Ovary (tissue), 10 donors: ENCODE measurements at regions of chr5 and their contacts with region 1.

Region 1: GRCh38 chr5:89384391-89384790 is 501.4 kb upstream of the MEF2C start:
- DNase-seq: no peak
- H3K4me3 ChIP-seq: no peak overlapping the region
- H3K27ac ChIP-seq: no peak overlapping the region
- H3K4me1 ChIP-seq: no peaks in the 10 kb centered on the region
- H3K27me3 ChIP-seq: no peaks in the 10 kb centered on the region
- CTCF ChIP-seq: no peak
- EP300 ChIP-seq: no peak
- POLR2A ChIP-seq: no peak

Region 2: GRCh38 chr5:89327608-89328007 is 56.8 kb before region 1 on chr5:
- intact Hi-C with region 1: loop called in 1 of 4 experiments (anchors 2 kb)
- DNase-seq: no peak
- H3K4me3 ChIP-seq: no peak overlapping the region
- H3K27ac ChIP-seq: no peak overlapping the region
- H3K4me1 ChIP-seq: no peaks in the 10 kb centered on the region
- H3K27me3 ChIP-seq: no peaks in the 10 kb centered on the region
- CTCF ChIP-seq: no peak
- EP300 ChIP-seq: no peak
- POLR2A ChIP-seq: no peak

Region 3: GRCh38 chr5:89338935-89339334 is 45.5 kb before region 1 on chr5:
- intact Hi-C with region 1: no loop called
- DNase-seq: no peak
- H3K4me3 ChIP-seq: no peak overlapping the region
- H3K27ac ChIP-seq: no peak overlapping the region
- H3K4me1 ChIP-seq: peaks cover 3% of the 10 kb centered on the region
- H3K27me3 ChIP-seq: peaks cover 2% of the 10 kb centered on the region
- CTCF ChIP-seq: no peak
- EP300 ChIP-seq: no peak
- POLR2A ChIP-seq: no peak

Region 4: GRCh38 chr5:89421035-89421434 is 36.6 kb after region 1 on chr5:
- intact Hi-C with region 1: no loop called
- DNase-seq: no peak
- H3K4me3 ChIP-seq: no peak overlapping the region
- H3K27ac ChIP-seq: no peak overlapping the region
- H3K4me1 ChIP-seq: no peaks in the 10 kb centered on the region
- H3K27me3 ChIP-seq: no peaks in the 10 kb centered on the region
- CTCF ChIP-seq: no peak
- EP300 ChIP-seq: no peak
- POLR2A ChIP-seq: no peak

Region 5: DNA sequence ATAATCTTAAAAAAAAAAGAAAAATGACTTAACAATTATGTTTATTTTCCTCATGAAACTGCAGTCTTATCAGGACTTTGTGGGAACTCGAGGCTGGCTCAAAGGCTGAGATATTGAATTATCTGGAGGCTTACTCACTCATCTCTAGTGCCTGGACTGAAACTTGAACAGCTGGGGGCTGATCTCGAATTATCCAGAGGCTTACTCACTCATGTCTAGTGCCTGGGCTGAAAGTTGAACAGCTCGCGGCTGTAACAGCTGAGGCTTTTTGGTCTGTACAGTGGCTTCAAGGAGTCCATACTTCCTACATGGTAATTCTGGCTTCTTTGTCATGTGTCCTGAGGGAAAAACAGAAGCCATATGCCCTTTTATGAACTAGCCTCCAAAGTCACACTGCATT is 653.3 kb after region 1 on chr5:
- intact Hi-C with region 1: no loop called
- DNase-seq: no peak
- H3K4me3 ChIP-seq: no peak overlapping the region
- H3K27ac ChIP-seq: no peak overlapping the region
- H3K4me1 ChIP-seq: no peaks in the 10 kb centered on the region
- H3K27me3 ChIP-seq: no peaks in the 10 kb centered on the region
- CTCF ChIP-seq: no peak
- EP300 ChIP-seq: no peak
- POLR2A ChIP-seq: no peak